ENCODE measurements at regions of chrX and their contacts with region 1.

Region 1: DNA sequence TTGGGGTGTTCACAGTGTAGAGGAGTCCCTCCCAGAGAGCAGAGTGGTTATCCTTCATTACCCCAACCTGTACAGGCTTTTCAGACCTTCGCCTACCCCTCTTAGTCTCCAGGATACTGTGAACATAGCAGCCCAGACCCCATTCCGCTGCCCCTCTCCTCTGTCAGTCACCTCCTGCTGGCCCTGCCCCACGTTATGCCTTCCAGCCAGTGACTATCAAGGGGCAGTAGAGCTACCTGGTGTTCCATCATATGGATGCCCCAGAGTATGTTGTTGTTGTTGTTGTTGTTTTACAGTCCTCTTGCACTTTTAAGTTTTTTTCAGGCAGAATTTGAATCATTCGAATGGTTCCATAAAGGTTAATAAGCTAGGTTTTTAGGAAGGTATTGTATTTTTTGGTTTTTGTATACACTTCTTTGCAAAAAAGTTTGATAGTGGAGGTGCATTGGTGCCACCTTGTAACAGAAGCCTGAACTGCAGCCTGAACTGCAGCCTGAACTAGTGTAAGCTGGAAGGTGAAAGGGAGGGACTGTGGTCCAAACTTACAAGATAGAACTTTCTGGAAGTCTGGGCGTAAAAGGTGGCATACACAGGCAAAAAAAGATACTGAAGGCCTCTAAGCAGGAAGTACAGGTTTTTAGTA is 101.4 kb upstream of the RAB40AL start:
- DNase-seq: peak; percentile 53
- ATAC-seq: peak; percentile 57
- H3K4me3 ChIP-seq: no peak overlapping the region
- H3K27ac ChIP-seq: no peak overlapping the region
- H3K4me1 ChIP-seq: peaks cover 5% of the 10 kb centered on the region; the same call in 1 of the 2 replicates
- H3K27me3 ChIP-seq: no peaks in the 10 kb centered on the region
- CTCF ChIP-seq: peak; percentile 79

Region 2: GRCh38 chrX:102643275-102643674 is 192.3 kb before region 1 on chrX:
- CTCF ChIA-PET with region 1: no interaction called
- POLR2A ChIA-PET with region 1: no interaction called
- intact Hi-C with region 1: loop called (anchors 5 kb)
- DNase-seq: no peak
- ATAC-seq: no peak
- H3K4me3 ChIP-seq: no peak overlapping the region
- H3K27ac ChIP-seq: no peak overlapping the region
- H3K4me1 ChIP-seq: no peaks in the 10 kb centered on the region
- H3K27me3 ChIP-seq: no peaks in the 10 kb centered on the region
- CTCF ChIP-seq: no peak

Region 3: GRCh38 chrX:102659790-102660757 is 175.6 kb before region 1 on chrX:
- CTCF ChIA-PET with region 1: no interaction called
- POLR2A ChIA-PET with region 1: no interaction called
- intact Hi-C with region 1: no loop called
- DNase-seq: no peak
- ATAC-seq: no peak
- H3K4me3 ChIP-seq: no peak overlapping the region
- H3K27ac ChIP-seq: no peak overlapping the region
- H3K4me1 ChIP-seq: no peaks in the 10 kb centered on the region
- H3K27me3 ChIP-seq: no peaks in the 10 kb centered on the region
- CTCF ChIP-seq: no peak

Region 4: GRCh38 chrX:102739651-102740050 is 96.0 kb before region 1 on chrX:
- CTCF ChIA-PET with region 1: no interaction called
- POLR2A ChIA-PET with region 1: no interaction called
- intact Hi-C with region 1: no loop called
- DNase-seq: no peak
- ATAC-seq: no peak
- H3K4me3 ChIP-seq: no peak overlapping the region
- H3K27ac ChIP-seq: no peak overlapping the region
- H3K4me1 ChIP-seq: no peaks in the 10 kb centered on the region
- H3K27me3 ChIP-seq: no peaks in the 10 kb centered on the region
- CTCF ChIP-seq: no peak

Region 5: GRCh38 chrX:103073445-103073844 is 237.8 kb after region 1 on chrX:
- CTCF ChIA-PET with region 1: no interaction called
- POLR2A ChIA-PET with region 1: no interaction called
- intact Hi-C with region 1: no loop called
- DNase-seq: no peak
- ATAC-seq: no peak
- H3K4me3 ChIP-seq: no peak overlapping the region
- H3K27ac ChIP-seq: no peak overlapping the region
- H3K4me1 ChIP-seq: no peaks in the 10 kb centered on the region
- H3K27me3 ChIP-seq: no peaks in the 10 kb centered on the region
- CTCF ChIP-seq: no peak

Region 6: GRCh38 chrX:103517246-103517645 is 681.6 kb after region 1 on chrX:
- CTCF ChIA-PET with region 1: no interaction called
- POLR2A ChIA-PET with region 1: no interaction called
- intact Hi-C with region 1: no loop called
- DNase-seq: no peak
- ATAC-seq: no peak
- H3K4me3 ChIP-seq: no peak overlapping the region
- H3K27ac ChIP-seq: no peak overlapping the region
- H3K4me1 ChIP-seq: peaks cover 3% of the 10 kb centered on the region; the same call in 1 of the 2 replicates
- H3K27me3 ChIP-seq: no peaks in the 10 kb centered on the region
- CTCF ChIP-seq: no peak

Measured in PC-3 (cell line).